Activated CD4-positive, alpha-beta T cell treated with anti-CD3 and anti-CD28 coated beads for 36 hours (primary cell): ENCODE measurements at regions of chr10 and their contacts with region 1.

Region 1: GRCh38 chr10:79068562-79069324 is at the start of gene ZMIZ1:
- DNase-seq: peak; percentile 89
- ATAC-seq: peak; percentile 72
- H3K4me3 Mint-ChIP-seq: peak within 1 kb of the TSS; percentile 73
- H3K27ac Mint-ChIP-seq: peak within 1 kb of the TSS; percentile 58
- H3K4me1 Mint-ChIP-seq: peaks cover 32% of the 10 kb centered on the region
- H3K27me3 Mint-ChIP-seq: peaks cover 3% of the 10 kb centered on the region
- total RNA-seq, gene ZMIZ1: 33.9 to 34.3 TPM

Region 2: GRCh38 chr10:78579995-78580394 is 488.7 kb before region 1 on chr10:
- CTCF ChIA-PET with region 1: no interaction called
- POLR2A ChIA-PET with region 1: no interaction called
- intact Hi-C with region 1: loop called in 1 of 2 experiments (anchors 2 kb)
- DNase-seq: no peak
- ATAC-seq: no peak
- H3K4me3 Mint-ChIP-seq: no peak overlapping the region
- H3K27ac Mint-ChIP-seq: peak overlapping the region; percentile 83
- H3K4me1 Mint-ChIP-seq: peaks cover 17% of the 10 kb centered on the region
- H3K27me3 Mint-ChIP-seq: no peaks in the 10 kb centered on the region

Region 3: DNA sequence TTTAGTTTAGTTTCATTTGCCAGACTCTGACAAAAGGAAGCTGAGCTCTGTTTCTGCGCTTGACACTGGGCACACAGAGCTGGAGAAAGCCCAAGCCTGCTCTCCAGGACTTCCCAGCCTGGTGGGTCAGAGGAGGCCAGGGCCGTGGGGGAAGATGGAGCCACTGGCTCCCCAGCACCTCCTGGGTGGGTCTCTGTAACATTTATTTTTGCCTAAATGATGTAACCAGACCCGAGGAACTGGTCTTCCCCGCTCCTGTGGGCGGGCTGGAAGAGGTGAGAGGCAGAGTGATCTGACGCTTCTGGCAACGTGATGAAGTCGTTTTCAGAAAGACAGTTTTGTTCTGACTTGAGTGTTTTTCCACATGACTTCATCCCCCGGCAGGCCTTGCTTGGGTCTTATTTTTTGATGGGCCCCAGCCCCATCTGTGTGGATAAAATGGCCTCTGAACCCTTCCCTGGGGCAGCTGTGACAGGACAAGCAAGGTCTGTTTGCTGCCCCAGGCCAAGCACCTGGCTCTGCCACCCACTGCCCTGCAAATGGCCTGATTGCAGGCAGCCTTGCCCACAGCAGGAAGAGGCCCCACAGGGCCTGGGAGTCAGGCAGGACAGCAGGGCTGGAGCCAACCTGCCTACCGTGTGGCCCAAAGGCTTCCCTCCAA is 305.0 kb before region 1 on chr10:
- CTCF ChIA-PET with region 1: no interaction called
- POLR2A ChIA-PET with region 1: no interaction called
- intact Hi-C with region 1: loop called in 1 of 2 experiments (anchors 5 kb)
- DNase-seq: peak; percentile 85
- ATAC-seq: peak; percentile 88
- H3K4me3 Mint-ChIP-seq: no peak overlapping the region
- H3K27ac Mint-ChIP-seq: peak overlapping the region; percentile 91
- H3K4me1 Mint-ChIP-seq: peaks cover 21% of the 10 kb centered on the region
- H3K27me3 Mint-ChIP-seq: no peaks in the 10 kb centered on the region

Region 4: DNA sequence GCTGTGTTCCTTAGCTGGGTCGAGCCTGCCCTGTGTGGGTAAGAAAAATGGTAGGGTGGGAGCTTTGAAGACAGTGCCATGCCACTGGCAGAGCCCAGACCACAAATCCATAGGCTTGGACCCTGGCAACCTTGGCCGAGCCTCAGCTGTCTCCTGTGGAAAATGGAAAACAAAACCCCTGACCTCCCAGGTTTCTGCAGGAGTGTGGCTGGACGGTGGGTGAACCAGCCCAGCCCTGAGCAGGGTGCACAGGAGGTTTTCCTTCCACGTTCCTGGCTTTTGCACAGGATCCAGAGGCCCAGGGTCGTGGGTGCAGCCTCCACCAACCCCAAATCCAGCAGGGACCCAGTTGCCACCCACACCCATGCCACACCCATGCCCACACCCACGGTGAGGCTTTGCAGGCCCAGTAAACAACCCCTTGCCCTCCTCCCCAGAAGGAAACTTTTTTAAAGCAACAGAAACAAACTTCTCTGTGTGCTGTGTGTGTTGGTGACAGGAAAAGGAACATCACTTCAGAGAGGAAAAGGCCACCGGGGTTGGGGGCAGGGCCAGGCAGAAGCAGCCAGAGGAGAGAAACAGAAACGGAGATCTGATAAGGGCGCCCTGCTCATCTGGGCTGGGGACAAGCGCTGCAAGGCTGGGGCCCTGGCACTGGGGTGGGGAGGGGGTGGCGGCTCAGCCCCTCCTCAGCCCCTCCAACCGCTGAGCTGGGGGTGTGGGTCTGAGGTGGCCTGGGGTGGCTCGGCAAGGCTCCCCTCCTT is 20.7 kb before region 1 on chr10:
- CTCF ChIA-PET with region 1: interaction called, 5 read pairs
- POLR2A ChIA-PET with region 1: no interaction called
- intact Hi-C with region 1: loop called (anchors 1 kb)
- DNase-seq: peak; percentile 81
- ATAC-seq: peak; percentile 86
- H3K4me3 Mint-ChIP-seq: no peak overlapping the region
- H3K27ac Mint-ChIP-seq: peak overlapping the region; percentile 85
- H3K4me1 Mint-ChIP-seq: peaks cover 46% of the 10 kb centered on the region
- H3K27me3 Mint-ChIP-seq: no peaks in the 10 kb centered on the region

Region 5: GRCh38 chr10:79445141-79445976 is 376.6 kb after region 1 on chr10 and contains the start of gene ZCCHC24:
- CTCF ChIA-PET with region 1: no interaction called
- POLR2A ChIA-PET with region 1: no interaction called
- intact Hi-C with region 1: loop called in 1 of 2 experiments (anchors 1 kb)
- DNase-seq: peak; percentile 93
- ATAC-seq: peak; percentile 97
- H3K4me3 Mint-ChIP-seq: peak within 1 kb of the TSS; percentile 65
- H3K27ac Mint-ChIP-seq: no peak within 1 kb of the TSS
- H3K4me1 Mint-ChIP-seq: peaks cover 16% of the 10 kb centered on the region
- H3K27me3 Mint-ChIP-seq: peaks cover 7% of the 10 kb centered on the region
- total RNA-seq, gene ZCCHC24: 0.53 to 0.75 TPM